ENCODE measurements at regions of chr16 and their contacts with region 1.

Region 1: GRCh38 chr16:9033125-9033830 is 58.2 kb upstream of the HAPSTR1 start:
- DNase-seq: peak; percentile 74
- ATAC-seq: peak; percentile 85
- H3K4me3 Mint-ChIP-seq: no peak overlapping the region
- H3K27ac Mint-ChIP-seq: no peak overlapping the region
- H3K4me1 Mint-ChIP-seq: no peaks in the 10 kb centered on the region
- H3K27me3 Mint-ChIP-seq: no peaks in the 10 kb centered on the region
- CTCF ChIP-seq: peak; percentile 31; the same call in 1 of the 2 replicates

Region 2: DNA sequence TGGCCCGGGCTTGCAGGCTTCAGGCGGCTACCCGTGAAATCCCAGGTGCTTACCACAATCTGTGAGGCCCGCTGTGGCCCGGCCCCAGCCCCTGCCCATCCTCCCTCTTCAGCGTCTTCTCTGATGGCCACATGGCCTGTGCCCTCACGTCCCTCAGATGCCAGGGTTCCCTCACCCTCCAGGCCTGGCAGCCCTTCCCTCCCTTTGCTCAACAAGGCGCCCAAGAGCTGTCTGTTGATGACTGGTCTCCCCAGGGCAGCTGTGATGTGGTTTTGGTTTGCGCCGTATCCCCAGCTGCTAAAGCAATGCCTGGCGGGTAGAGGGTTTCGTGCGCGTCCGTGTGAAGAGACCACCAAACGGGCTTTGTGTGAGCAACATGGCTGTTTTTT is 200.6 kb before region 1 on chr16:
- CTCF ChIA-PET with region 1: no interaction called
- POLR2A ChIA-PET with region 1: no interaction called
- DNase-seq: no peak
- ATAC-seq: peak; percentile 12
- H3K4me3 Mint-ChIP-seq: peak overlapping the region; percentile 48
- H3K27ac Mint-ChIP-seq: peak overlapping the region; percentile 100
- H3K4me1 Mint-ChIP-seq: peaks cover 62% of the 10 kb centered on the region
- H3K27me3 Mint-ChIP-seq: no peaks in the 10 kb centered on the region
- CTCF ChIP-seq: no peak

Region 3: DNA sequence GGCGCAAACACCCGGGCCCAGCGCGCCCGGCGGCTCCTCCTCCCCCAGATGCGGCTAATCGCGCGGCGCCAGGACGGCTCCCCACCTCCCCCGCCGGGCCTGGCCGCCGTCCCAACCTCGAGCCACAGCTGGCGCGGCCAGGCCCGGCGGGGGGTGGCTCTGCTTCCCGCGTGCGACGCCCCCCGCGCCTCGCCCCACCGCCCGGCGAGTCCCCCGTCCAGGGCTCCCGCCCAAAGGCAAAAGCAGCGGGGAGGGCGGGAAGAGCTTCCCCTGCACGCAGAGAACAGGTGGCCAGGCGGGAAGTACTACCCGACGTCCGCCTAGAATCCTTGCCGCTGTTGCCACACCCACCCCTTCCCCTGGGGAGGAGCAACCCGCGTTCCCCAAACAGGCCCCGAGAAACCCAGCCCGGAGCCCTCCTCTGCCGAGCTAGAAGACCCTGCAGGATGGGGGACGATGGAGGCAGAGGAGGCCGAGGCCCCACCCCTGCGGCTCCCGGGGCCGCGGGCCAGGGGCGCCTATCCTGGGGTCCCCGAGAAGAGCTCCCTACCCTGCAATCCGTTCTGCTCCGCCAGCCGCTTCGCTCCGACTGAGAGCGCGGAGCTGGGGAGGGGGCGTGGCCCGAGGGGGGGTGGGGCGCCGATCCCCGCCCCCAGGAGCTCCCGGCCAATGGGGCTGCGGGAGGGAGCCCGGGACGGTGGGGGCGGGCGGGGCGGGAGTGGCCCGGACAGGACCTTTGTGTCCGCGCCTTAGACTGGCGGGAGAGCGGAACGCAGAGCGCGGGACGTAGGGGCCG is 164.7 kb before region 1 on chr16 and contains the start of gene CARHSP1:
- CTCF ChIA-PET with region 1: interaction called, 10 read pairs
- POLR2A ChIA-PET with region 1: no interaction called
- DNase-seq: peak; percentile 92
- ATAC-seq: peak; percentile 59
- H3K4me3 Mint-ChIP-seq: peak within 1 kb of the TSS; percentile 89
- H3K27ac Mint-ChIP-seq: peak within 1 kb of the TSS; percentile 99
- H3K4me1 Mint-ChIP-seq: peaks cover 40% of the 10 kb centered on the region
- H3K27me3 Mint-ChIP-seq: no peaks in the 10 kb centered on the region
- CTCF ChIP-seq: no peak
- total RNA-seq, gene CARHSP1: 260 to 271 TPM (median 261 TPM) in 3 replicates

Region 4: DNA sequence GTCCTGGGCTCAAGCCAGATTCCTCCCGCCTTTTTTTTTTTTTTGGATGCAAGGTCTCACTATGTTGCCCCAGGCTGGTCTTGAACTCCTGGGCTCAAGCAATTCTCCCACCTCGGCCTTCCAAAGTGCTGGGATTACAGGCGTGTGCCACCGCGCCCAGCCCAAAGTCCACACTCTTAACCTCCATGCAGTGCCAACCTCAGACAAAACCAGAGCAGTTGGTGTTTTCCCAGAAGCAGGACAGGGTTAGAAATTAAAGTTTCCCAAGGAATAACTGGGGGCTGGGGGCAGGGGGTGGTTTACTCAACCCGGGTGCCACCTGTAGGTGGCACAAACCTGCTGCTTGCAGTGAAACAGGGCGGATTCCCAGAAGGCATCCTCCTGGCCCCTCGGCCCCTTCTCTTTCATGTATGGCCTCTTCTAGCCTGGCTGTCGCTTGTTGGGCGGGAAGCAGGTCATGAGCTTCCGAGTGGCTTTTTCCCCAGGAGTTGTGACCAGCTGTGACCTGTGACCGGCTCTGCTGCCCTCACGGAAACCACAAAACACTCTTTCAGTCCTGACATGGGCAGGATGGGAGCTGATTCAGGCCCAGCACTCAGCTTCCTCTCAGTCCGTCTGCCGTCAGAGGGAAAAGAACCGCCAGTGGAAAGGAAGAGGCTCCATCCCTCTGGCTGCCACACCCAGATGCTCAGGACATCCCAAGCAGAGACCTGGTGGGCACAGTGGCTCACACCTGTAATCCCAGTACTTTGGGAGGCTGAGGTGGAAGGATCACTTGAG is 44.0 kb before region 1 on chr16:
- CTCF ChIA-PET with region 1: interaction called, 11 read pairs
- POLR2A ChIA-PET with region 1: no interaction called
- DNase-seq: no peak
- ATAC-seq: no peak
- H3K4me3 Mint-ChIP-seq: no peak overlapping the region
- H3K27ac Mint-ChIP-seq: no peak overlapping the region; the same call in 1 of the 2 replicates
- H3K4me1 Mint-ChIP-seq: peaks cover 30% of the 10 kb centered on the region
- H3K27me3 Mint-ChIP-seq: peaks cover 15% of the 10 kb centered on the region
- CTCF ChIP-seq: no peak

Region 5: GRCh38 chr16:8998114-8998513 is 35.2 kb before region 1 on chr16:
- CTCF ChIA-PET with region 1: interaction called, 11 read pairs
- POLR2A ChIA-PET with region 1: interaction called, 4 read pairs
- DNase-seq: no peak
- ATAC-seq: no peak
- H3K4me3 Mint-ChIP-seq: no peak overlapping the region
- H3K27ac Mint-ChIP-seq: no peak overlapping the region
- H3K4me1 Mint-ChIP-seq: peaks cover 5% of the 10 kb centered on the region; the same call in 1 of the 2 replicates
- H3K27me3 Mint-ChIP-seq: no peaks in the 10 kb centered on the region; the same call in 1 of the 2 replicates
- CTCF ChIP-seq: no peak

Region 6: GRCh38 chr16:9016824-9017223 is 16.5 kb before region 1 on chr16:
- CTCF ChIA-PET with region 1: interaction called, 42 read pairs
- POLR2A ChIA-PET with region 1: interaction called, 5 read pairs
- DNase-seq: no peak
- ATAC-seq: no peak
- H3K4me3 Mint-ChIP-seq: no peak overlapping the region
- H3K27ac Mint-ChIP-seq: no peak overlapping the region
- H3K4me1 Mint-ChIP-seq: peaks cover 7% of the 10 kb centered on the region
- H3K27me3 Mint-ChIP-seq: peaks cover 4% of the 10 kb centered on the region
- CTCF ChIP-seq: no peak

Region 7: DNA sequence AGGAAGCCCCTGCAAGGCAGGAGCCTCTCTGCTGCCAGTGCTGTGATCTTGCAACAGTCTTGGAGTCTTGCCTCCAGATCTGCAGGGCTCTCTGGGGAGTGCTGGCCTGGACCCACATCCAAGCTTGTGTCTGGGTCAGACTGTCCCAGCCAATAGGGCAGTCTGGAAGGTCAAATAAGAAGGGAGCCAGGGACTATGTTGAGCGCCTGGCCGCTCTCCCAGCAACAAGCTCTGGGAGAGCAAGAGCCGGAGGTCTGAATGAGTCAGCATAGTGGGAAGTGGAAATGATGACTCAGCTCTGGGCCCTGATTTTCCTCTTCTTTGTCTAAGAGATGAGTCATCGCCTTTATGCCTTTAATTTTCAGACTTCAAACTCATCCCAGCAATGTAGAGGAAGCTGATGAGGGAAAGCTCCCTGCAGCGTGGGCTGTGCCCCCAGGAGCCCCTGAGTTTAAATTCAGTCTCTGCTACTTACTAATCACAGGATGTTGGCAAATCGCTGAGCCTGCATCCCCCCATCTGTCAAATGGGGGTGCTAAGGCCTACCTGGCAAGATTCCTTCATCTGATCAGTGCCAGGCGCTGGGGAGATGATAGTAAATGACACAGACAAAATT is 14.5 kb after region 1 on chr16:
- CTCF ChIA-PET with region 1: interaction called, 23 read pairs
- POLR2A ChIA-PET with region 1: interaction called, 6 read pairs
- DNase-seq: peak; percentile 24
- ATAC-seq: peak; percentile 80
- H3K4me3 Mint-ChIP-seq: no peak overlapping the region
- H3K27ac Mint-ChIP-seq: no peak overlapping the region; the same call in none of the 2 replicates
- H3K4me1 Mint-ChIP-seq: peaks cover 18% of the 10 kb centered on the region
- H3K27me3 Mint-ChIP-seq: no peaks in the 10 kb centered on the region
- CTCF ChIP-seq: no peak

Measured in WTC11 (cell line).